ENCODE measurements at regions of chr5 and their contacts with region 1.

Region 1: GRCh38 chr5:173907686-173908371 is 19.7 kb downstream of the CPEB4 start:
- DNase-seq: no peak
- H3K4me3 ChIP-seq: peak overlapping the region; percentile 50
- H3K27ac ChIP-seq: peak overlapping the region; percentile 75
- H3K4me1 ChIP-seq: peaks cover 86% of the 10 kb centered on the region
- CTCF ChIP-seq: no peak

Region 2: GRCh38 chr5:173895401-173896165 is 12.2 kb before region 1 on chr5:
- CTCF ChIA-PET with region 1: interaction called, 4 read pairs
- POLR2A ChIA-PET with region 1: interaction called, 114 read pairs
- intact Hi-C with region 1: no loop called
- DNase-seq: no peak
- H3K4me3 ChIP-seq: peak overlapping the region; percentile 88
- H3K27ac ChIP-seq: peak overlapping the region; percentile 88
- H3K4me1 ChIP-seq: peaks cover 55% of the 10 kb centered on the region
- CTCF ChIP-seq: no peak